Gastrocnemius medialis (tissue), 4 donors: ENCODE measurements at regions of chr12 and their contacts with region 1.

Region 1: DNA sequence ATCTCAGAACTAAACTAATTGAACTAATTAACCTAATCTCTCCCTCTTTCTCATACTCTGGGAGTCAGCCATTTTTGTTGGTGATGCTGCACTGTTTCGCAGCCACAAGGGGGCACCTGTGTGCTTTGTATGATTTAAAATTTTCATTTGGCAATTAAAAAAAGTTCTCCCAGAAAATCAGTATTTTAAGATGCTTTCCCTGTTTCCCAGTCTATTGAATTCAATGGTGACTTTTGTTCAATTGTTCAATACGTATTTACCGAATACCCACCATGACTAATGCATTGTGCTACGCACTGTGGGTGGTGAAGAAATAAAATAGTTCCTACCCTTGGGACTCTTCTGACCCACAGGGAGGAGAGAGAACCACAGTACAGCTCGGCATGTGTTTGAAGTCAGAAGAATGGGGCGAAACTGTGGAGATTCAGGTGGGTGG is 63.7 kb downstream of the ZNF664 start:
- DNase-seq: no peak
- ATAC-seq: peak in 1 of 2 donors; percentile 49
- H3K4me3 ChIP-seq: no peak overlapping the region
- H3K27ac ChIP-seq: no peak overlapping the region
- H3K4me1 ChIP-seq: no peaks in the 10 kb centered on the region
- H3K27me3 ChIP-seq: no peaks in the 10 kb centered on the region
- CTCF ChIP-seq: peak; percentile 81 to 91 (median 86)
- POLR2A ChIP-seq: no peak

Region 2: DNA sequence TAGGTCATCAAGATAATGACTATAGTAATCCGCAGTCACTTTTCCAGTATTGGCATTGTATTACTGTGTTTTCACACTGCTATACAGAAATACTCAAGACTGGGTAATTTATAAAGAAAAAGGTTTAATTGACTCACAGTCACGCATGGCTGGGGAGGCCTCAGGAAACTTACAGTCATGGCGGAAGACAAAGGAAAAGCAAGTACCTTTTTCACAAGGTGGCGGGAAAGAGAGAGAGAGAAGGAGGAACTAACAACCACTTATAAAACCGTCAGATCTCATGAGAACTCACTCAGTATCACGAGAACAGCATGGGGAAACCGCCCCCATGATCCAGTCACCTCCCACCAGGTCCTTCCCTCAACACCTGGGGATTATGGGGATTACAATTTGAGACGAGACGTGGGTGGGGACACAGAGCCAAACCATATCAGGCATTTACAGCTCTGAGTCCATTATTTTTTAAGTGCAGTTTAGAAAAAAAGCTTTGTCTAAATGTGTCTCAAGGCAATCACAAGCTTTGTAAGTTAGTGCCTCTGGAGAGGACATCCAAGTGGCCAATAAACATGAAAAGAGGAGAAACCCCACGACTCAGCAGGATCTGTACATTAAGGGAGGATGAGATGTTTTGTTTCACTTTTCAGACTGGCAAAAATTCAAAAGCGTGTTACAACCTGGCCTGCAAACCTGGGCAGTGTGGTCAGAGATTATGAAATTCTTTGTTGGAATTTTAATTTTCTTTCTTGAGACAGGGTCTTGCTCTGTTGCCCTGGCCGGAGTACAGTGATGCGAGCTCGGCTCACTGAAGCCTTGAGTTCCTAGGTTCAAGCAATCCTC is 192.6 kb before region 1 on chr12:
- in situ Hi-C with region 1: no loop called
- intact Hi-C with region 1: no loop called
- DNase-seq: no peak
- ATAC-seq: no peak
- H3K4me3 ChIP-seq: no peak overlapping the region
- H3K27ac ChIP-seq: no peak overlapping the region
- H3K4me1 ChIP-seq: no peaks in the 10 kb centered on the region
- H3K27me3 ChIP-seq: no peaks in the 10 kb centered on the region
- CTCF ChIP-seq: no peak
- POLR2A ChIP-seq: no peak

Region 3: GRCh38 chr12:123905319-123905925 is 131.3 kb before region 1 on chr12:
- in situ Hi-C with region 1: loop called in 1 of 4 experiments (anchors 10 kb)
- intact Hi-C with region 1: no loop called
- DNase-seq: peak in 1 of 2 donors; percentile 20
- ATAC-seq: peak in 1 of 2 donors; percentile 19
- H3K4me3 ChIP-seq: no peak overlapping the region
- H3K27ac ChIP-seq: no peak overlapping the region
- H3K4me1 ChIP-seq: no peaks in the 10 kb centered on the region
- H3K27me3 ChIP-seq: no peaks in the 10 kb centered on the region
- CTCF ChIP-seq: peak; percentile 32 to 77 (median 55)
- POLR2A ChIP-seq: no peak

Region 4: GRCh38 chr12:123972457-123973401 is 64.0 kb before region 1 on chr12 and contains the starts of genes CCDC92 and ZNF664:
- in situ Hi-C with region 1: no loop called
- intact Hi-C with region 1: loop called (anchors 1 kb)
- DNase-seq: peak; percentile 85 to 89
- ATAC-seq: peak; percentile 79 to 82
- H3K4me3 ChIP-seq: peak within 1 kb of the TSS; percentile 72 to 96 (median 94)
- H3K27ac ChIP-seq: peak within 1 kb of the TSS; percentile 91 to 92 (median 92)
- H3K4me1 ChIP-seq: peaks cover 10 to 13% of the 10 kb centered on the region in 2 donors
- H3K27me3 ChIP-seq: no peaks in the 10 kb centered on the region
- CTCF ChIP-seq: peak in 3 of 5 experiments; percentile 15 to 33 (median 22)
- POLR2A ChIP-seq: peak; percentile 65 to 77
- total RNA-seq, gene CCDC92: 21.1 to 29.1 (median 23.7) TPM
- total RNA-seq, gene ZNF664: 18.1 to 37.0 (median 32.6) TPM

Region 5: GRCh38 chr12:124321040-124321481 is 284.4 kb after region 1 on chr12:
- in situ Hi-C with region 1: loop called in 1 of 4 experiments (anchors 10 kb)
- intact Hi-C with region 1: loop called (anchors 1 kb)
- DNase-seq: peak; percentile 37 to 50
- ATAC-seq: peak; percentile 72 to 74
- H3K4me3 ChIP-seq: no peak overlapping the region
- H3K27ac ChIP-seq: no peak overlapping the region
- H3K4me1 ChIP-seq: no peaks in the 10 kb centered on the region
- H3K27me3 ChIP-seq: no peaks in the 10 kb centered on the region
- CTCF ChIP-seq: peak; percentile 92 to 95 (median 94)
- POLR2A ChIP-seq: no peak

Region 6: GRCh38 chr12:124906606-124907261 is 870.0 kb after region 1 on chr12:
- in situ Hi-C with region 1: loop called in 1 of 4 experiments (anchors 25 kb)
- intact Hi-C with region 1: no loop called
- DNase-seq: peak; percentile 88
- ATAC-seq: peak; percentile 52
- H3K4me3 ChIP-seq: no peak overlapping the region
- H3K27ac ChIP-seq: peak overlapping the region; percentile 56 to 78 (median 60)
- H3K4me1 ChIP-seq: peaks cover 29 to 32% of the 10 kb centered on the region in 2 donors
- H3K27me3 ChIP-seq: no peaks in the 10 kb centered on the region
- CTCF ChIP-seq: peak; percentile 90 to 98 (median 97)
- POLR2A ChIP-seq: no peak